ENCODE measurements at regions of chr12 and their contacts with region 1.

Region 1: GRCh38 chr12:20220339-20220738 is 148.0 kb upstream of the PDE3A start:
- DNase-seq: peak; percentile 75
- H3K4me3 ChIP-seq: no peak overlapping the region
- H3K27ac ChIP-seq: no peak overlapping the region
- H3K4me1 ChIP-seq: no peaks in the 10 kb centered on the region
- H3K27me3 ChIP-seq: no peaks in the 10 kb centered on the region
- CTCF ChIP-seq: peak; percentile 71

Region 2: GRCh38 chr12:19739183-19739776 is 481.1 kb before region 1 on chr12:
- CTCF ChIA-PET with region 1: no interaction called
- POLR2A ChIA-PET with region 1: no interaction called
- intact Hi-C with region 1: loop called (anchors 2 kb)
- DNase-seq: peak; percentile 81
- H3K4me3 ChIP-seq: no peak overlapping the region
- H3K27ac ChIP-seq: no peak overlapping the region
- H3K4me1 ChIP-seq: no peaks in the 10 kb centered on the region
- H3K27me3 ChIP-seq: peaks cover 8% of the 10 kb centered on the region
- CTCF ChIP-seq: peak; percentile 74

Region 3: GRCh38 chr12:19757317-19757877 is 462.9 kb before region 1 on chr12:
- CTCF ChIA-PET with region 1: interaction called, 3 read pairs
- POLR2A ChIA-PET with region 1: no interaction called
- intact Hi-C with region 1: loop called (anchors 5 kb)
- DNase-seq: peak; percentile 54
- H3K4me3 ChIP-seq: no peak overlapping the region
- H3K27ac ChIP-seq: no peak overlapping the region
- H3K4me1 ChIP-seq: no peaks in the 10 kb centered on the region
- H3K27me3 ChIP-seq: no peaks in the 10 kb centered on the region
- CTCF ChIP-seq: peak; percentile 76

Region 4: GRCh38 chr12:20314328-20314727 is 94.0 kb after region 1 on chr12:
- CTCF ChIA-PET with region 1: no interaction called
- POLR2A ChIA-PET with region 1: no interaction called
- intact Hi-C with region 1: no loop called
- DNase-seq: no peak
- H3K4me3 ChIP-seq: no peak overlapping the region
- H3K27ac ChIP-seq: no peak overlapping the region
- H3K4me1 ChIP-seq: no peaks in the 10 kb centered on the region
- H3K27me3 ChIP-seq: no peaks in the 10 kb centered on the region
- CTCF ChIP-seq: no peak